ENCODE measurements at regions of chr15 and their contacts with region 1.

Region 1: GRCh38 chr15:40421246-40422157 is 15.9 kb downstream of the IVD start:
- DNase-seq: peak; percentile 57
- H3K4me3 ChIP-seq: peak overlapping the region in 1 of 3 experiments; percentile 24
- H3K27ac ChIP-seq: no peak overlapping the region
- H3K4me1 ChIP-seq: peaks cover 22% of the 10 kb centered on the region
- H3K27me3 ChIP-seq: no peaks in the 10 kb centered on the region
- CTCF ChIP-seq: peak; percentile 76 to 96

Region 2: DNA sequence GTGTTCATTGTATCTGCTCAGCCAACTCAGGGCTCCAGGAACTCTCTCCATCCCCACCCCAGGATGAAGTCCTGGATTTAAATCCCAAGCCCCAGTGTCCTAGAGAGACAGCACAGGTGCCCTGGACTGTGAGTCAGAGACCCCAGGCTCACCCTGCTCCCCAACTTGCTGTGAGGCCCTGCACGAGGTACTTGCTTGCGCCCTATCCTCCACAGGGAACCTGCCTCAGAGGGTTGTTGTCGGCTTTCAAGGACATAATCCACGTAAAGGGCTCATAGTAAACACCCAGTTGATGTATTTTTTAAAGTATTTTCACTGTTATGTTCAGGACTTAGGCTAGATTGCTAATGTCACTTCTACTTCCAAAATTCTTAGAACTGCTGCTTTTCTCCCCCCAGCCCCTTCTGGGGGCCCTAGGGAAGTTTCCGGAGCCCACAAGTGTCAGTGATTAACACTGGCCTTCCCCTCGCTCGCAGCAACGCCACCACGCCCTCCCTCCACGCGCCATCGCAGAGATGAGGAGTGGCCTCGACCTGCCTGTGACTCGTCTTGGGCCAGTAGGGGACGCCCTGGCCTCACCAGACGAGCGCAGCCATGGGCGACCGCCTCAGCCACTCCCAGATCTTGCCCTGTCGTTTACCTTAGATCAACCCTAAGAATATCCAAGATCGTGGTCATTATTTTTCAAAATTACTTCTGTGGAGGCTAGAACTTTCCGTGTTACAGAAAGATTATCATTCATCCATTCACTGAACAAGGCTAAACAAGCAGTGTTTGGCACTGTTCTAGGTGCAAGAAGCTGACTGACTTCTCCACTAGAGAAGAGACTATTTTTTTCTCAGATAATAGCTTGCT is 376.6 kb before region 1 on chr15:
- CTCF ChIA-PET with region 1: no interaction called
- dilution Hi-C with region 1: no loop called
- in situ Hi-C with region 1: no loop called
- intact Hi-C with region 1: loop called (anchors 2 kb)
- DNase-seq: peak; percentile 75
- H3K4me3 ChIP-seq: peak overlapping the region in 1 of 3 experiments; percentile 3
- H3K27ac ChIP-seq: peak overlapping the region; percentile 23
- H3K4me1 ChIP-seq: peaks cover 35% of the 10 kb centered on the region
- H3K27me3 ChIP-seq: no peaks in the 10 kb centered on the region
- CTCF ChIP-seq: peak; percentile 84 to 94

Region 3: GRCh38 chr15:40338041-40338657 is 83.4 kb before region 1 on chr15:
- CTCF ChIA-PET with region 1: no interaction called
- dilution Hi-C with region 1: no loop called
- in situ Hi-C with region 1: no loop called
- intact Hi-C with region 1: loop called (anchors 1 kb)
- DNase-seq: peak; percentile 66
- H3K4me3 ChIP-seq: peak overlapping the region in 2 of 3 experiments; percentile 1 to 81
- H3K27ac ChIP-seq: peak overlapping the region; percentile 68
- H3K4me1 ChIP-seq: peaks cover 75% of the 10 kb centered on the region
- H3K27me3 ChIP-seq: no peaks in the 10 kb centered on the region
- CTCF ChIP-seq: peak; percentile 63 to 86

Region 4: GRCh38 chr15:40357723-40358470 is 63.6 kb before region 1 on chr15 and contains the start of gene DISP2:
- CTCF ChIA-PET with region 1: no interaction called
- dilution Hi-C with region 1: loop called (anchors 5 kb)
- in situ Hi-C with region 1: no loop called
- intact Hi-C with region 1: no loop called
- DNase-seq: peak; percentile 71
- H3K4me3 ChIP-seq: peak within 1 kb of the TSS; percentile 37 to 53 (median 52)
- H3K27ac ChIP-seq: no peak within 1 kb of the TSS
- H3K4me1 ChIP-seq: peaks cover 32% of the 10 kb centered on the region
- H3K27me3 ChIP-seq: no peaks in the 10 kb centered on the region
- CTCF ChIP-seq: no peak
- total RNA-seq, gene DISP2: under 0.01 to 1.6 TPM

Region 5: DNA sequence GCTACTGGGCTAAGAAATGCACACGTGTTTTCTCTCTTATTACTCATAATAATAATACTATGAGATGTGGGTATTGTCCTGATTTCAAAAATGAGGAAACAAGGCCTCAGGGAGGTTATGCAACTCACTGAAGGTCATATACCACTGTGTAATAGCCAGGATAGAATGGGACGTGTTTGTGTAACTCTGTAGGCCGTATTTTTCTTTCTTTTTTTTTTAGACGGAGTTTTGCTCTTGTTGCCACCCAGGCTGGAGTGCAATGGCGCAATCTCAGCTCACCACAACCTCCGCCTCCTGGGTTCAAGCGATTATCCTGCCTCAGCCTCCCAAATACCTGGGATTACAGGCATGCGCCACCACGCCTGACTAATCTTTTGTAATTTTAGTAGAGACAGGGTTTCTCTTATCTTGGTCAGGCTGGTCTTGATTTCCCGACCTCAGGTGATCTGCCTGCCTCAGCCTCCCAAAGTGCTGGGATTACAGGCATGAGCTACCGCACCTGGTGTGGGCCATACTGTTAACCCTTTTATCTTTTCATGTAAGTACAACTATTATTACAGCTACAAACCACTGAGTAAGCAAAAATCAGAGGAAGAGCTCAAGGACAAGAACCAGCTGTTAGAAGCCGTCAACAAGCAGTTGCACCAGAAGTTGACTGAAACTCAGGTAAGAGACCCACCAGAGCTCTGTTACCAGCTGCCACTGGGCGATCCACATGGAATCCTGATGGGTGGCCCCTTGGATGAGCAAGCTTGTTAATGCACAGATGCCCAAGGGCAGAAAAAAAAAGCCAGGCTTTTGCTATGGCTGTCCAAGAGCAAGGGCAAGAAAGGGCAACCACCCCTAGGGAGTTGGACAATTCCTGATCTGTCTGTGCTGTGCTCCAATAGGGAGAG is 32.3 kb before region 1 on chr15:
- CTCF ChIA-PET with region 1: no interaction called
- dilution Hi-C with region 1: loop called (anchors 5 kb)
- in situ Hi-C with region 1: no loop called
- intact Hi-C with region 1: no loop called
- DNase-seq: peak; percentile 53
- H3K4me3 ChIP-seq: no peak overlapping the region
- H3K27ac ChIP-seq: no peak overlapping the region
- H3K4me1 ChIP-seq: peaks cover 2% of the 10 kb centered on the region
- H3K27me3 ChIP-seq: no peaks in the 10 kb centered on the region
- CTCF ChIP-seq: no peak